HEK293T (cell line): ENCODE measurements at regions of chrX and their contacts with region 1.

Region 1: GRCh38 chrX:120560842-120561633 is at the start of gene CUL4B:
- DNase-seq: peak; percentile 82

Region 2: DNA sequence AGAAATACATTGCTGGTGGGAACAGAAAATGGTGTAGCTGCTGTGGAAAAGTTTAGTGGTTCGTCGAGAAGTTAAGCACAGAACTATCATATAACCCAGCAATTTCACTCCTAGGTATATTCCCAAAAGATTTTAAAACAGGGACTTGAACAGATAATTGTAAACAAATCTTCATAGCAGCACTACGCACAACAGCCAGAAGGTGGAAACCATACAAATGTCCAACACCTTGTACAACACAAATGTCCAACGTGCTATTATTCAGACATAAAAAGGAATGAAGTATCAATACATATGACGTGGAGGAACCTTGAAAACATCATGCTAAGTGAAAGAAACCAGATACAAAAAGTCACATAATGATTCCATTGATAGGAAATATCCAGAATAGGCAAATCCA is 38.2 kb before region 1 on chrX:
- CTCF ChIA-PET with region 1: no interaction called
- POLR2A ChIA-PET with region 1: no interaction called
- DNase-seq: no peak

Region 3: GRCh38 chrX:120603707-120604360 is 42.8 kb after region 1 on chrX and contains the start of gene MCTS1:
- CTCF ChIA-PET with region 1: no interaction called
- POLR2A ChIA-PET with region 1: interaction called, 46 read pairs
- DNase-seq: peak; percentile 88